ENCODE measurements at regions of chr19 and their contacts with region 1.

Region 1: GRCh38 chr19:1767464-1767933 is 14.2 kb downstream of the ONECUT3 start:
- DNase-seq: peak in 2 of 5 donors; percentile 30 to 41
- ATAC-seq: peak in 3 of 4 donors; percentile 65 to 73 (median 71)
- H3K4me3 ChIP-seq: no peak overlapping the region
- H3K27ac ChIP-seq: no peak overlapping the region
- H3K4me1 ChIP-seq: peaks cover 0 to 4% (median 0%) of the 10 kb centered on the region in 12 donors
- H3K27me3 ChIP-seq: peaks cover 57 to 100% (median 76%) of the 10 kb centered on the region in 9 donors
- CTCF ChIP-seq: peak; percentile 80 to 95 (median 90)
- POLR2A ChIP-seq: no peak

Region 2: DNA sequence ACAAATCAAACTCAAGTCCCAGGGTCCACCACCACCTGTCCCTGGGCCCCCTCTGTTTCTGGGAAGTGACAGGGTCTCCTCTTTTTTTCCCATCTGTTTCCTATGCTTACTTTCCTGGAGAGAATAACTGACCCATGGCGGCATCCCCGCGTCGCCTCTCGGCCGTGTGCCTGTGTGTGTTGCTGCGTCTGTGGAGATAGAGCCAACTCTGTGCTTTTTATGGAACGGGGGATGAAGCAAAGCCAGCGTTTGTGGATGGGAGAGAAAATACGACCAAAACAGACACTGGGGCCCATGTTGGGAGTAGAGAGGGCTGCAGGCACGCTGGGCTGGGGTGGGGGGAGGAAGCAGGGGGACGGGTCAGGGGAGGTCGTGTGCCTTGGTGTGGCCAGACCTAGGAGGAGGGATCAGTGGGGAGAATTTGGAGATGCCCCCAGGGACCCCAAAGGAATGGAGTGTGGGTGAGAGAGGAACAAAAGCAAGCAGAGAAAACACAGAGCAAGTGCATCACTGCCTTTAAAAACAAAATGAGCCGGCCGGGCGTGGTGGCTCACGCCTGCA is 227.1 kb before region 1 on chr19:
- intact Hi-C with region 1: loop called in 6 of 10 experiments (anchors 5 to 10 kb)
- DNase-seq: no peak
- ATAC-seq: peak in 2 of 4 donors; percentile 64 to 71
- H3K4me3 ChIP-seq: no peak overlapping the region
- H3K27ac ChIP-seq: peak overlapping the region in 2 of 12 donors; percentile 17 to 49
- H3K4me1 ChIP-seq: peaks cover 0 to 20% (median 3%) of the 10 kb centered on the region in 12 donors
- H3K27me3 ChIP-seq: peaks cover 0 to 31% (median 1%) of the 10 kb centered on the region in 9 donors
- CTCF ChIP-seq: no peak
- POLR2A ChIP-seq: no peak

Region 3: GRCh38 chr19:1549332-1549945 is 218.1 kb before region 1 on chr19:
- intact Hi-C with region 1: loop called (anchors 1 to 10 kb)
- DNase-seq: no peak
- ATAC-seq: no peak
- H3K4me3 ChIP-seq: no peak overlapping the region
- H3K27ac ChIP-seq: no peak overlapping the region
- H3K4me1 ChIP-seq: peaks cover 0 to 5% (median 0%) of the 10 kb centered on the region in 12 donors
- H3K27me3 ChIP-seq: peaks cover 0 to 17% (median 7%) of the 10 kb centered on the region in 9 donors
- CTCF ChIP-seq: no peak
- POLR2A ChIP-seq: no peak

Region 4: GRCh38 chr19:1605236-1606137 is 162.0 kb before region 1 on chr19 and contains the start of gene UQCR11:
- intact Hi-C with region 1: loop called in 1 of 10 experiments (anchors 5 kb)
- DNase-seq: peak; percentile 96 to 97 (median 97)
- ATAC-seq: peak; percentile 94 to 97 (median 96)
- H3K4me3 ChIP-seq: peak within 1 kb of the TSS; percentile 80 to 100 (median 90)
- H3K27ac ChIP-seq: peak within 1 kb of the TSS; percentile 87 to 97 (median 95)
- H3K4me1 ChIP-seq: peaks cover 0 to 45% (median 28%) of the 10 kb centered on the region in 12 donors
- H3K27me3 ChIP-seq: no peaks in the 10 kb centered on the region
- CTCF ChIP-seq: peak; percentile 35 to 75 (median 54)
- POLR2A ChIP-seq: peak in 1 of 2 donors; percentile 51
- total RNA-seq, gene UQCR11: 170 to 982 (median 690) TPM

Region 5: DNA sequence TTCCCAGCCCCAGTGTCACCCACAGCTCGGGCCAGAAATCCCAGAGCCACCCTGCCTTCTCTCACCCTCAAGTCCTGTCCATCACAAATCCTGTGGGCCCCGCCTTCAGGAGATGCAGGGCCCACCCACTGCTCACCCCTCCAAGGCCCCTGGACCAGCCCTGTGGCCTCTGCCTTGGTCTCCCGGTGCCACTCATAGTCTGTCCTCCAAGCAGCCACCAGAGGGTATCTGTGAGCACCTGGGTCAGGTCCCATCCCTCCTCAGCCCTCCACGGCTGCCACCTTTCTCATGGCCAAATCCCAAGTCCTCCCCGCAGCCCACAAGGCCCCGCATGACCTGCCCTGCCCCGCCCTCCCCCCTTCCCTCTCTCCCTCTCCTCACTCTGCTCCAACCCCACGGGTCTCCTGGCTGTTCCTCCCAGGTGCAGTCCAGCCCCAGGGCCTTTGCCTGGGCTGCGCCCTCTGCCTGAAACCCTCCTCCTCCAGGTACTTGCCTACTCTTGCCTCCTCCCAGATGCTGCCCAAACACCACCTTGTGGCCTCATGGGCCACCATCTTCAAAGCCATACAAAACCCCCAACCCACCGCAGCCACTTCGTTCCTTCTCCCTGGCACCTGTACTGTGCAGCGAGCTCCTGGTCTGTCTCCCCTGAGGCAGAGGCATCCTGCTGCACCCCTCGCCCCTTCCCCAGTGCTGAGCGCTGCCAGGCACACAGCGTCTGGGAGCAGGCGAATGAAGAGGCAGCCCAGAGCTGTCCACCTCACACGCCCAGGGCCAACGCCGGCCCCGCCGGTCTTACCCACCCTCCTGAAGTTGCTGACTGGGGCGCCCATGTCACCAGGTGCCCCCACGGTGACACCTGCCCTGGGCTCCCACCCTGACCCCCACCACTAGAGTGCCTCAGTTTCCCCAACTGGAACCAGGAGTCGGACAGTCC is 149.1 kb before region 1 on chr19:
- intact Hi-C with region 1: loop called in 1 of 10 experiments (anchors 5 kb)
- DNase-seq: peak in 1 of 5 donors; percentile 61
- ATAC-seq: peak; percentile 51 to 69 (median 60)
- H3K4me3 ChIP-seq: no peak overlapping the region
- H3K27ac ChIP-seq: peak overlapping the region in 5 of 12 donors; percentile 19 to 59 (median 40)
- H3K4me1 ChIP-seq: peaks cover 0 to 23% (median 9%) of the 10 kb centered on the region in 12 donors
- H3K27me3 ChIP-seq: no peaks in the 10 kb centered on the region
- CTCF ChIP-seq: peak in 10 of 12 donors; percentile 8 to 52 (median 38)
- POLR2A ChIP-seq: no peak

Region 6: DNA sequence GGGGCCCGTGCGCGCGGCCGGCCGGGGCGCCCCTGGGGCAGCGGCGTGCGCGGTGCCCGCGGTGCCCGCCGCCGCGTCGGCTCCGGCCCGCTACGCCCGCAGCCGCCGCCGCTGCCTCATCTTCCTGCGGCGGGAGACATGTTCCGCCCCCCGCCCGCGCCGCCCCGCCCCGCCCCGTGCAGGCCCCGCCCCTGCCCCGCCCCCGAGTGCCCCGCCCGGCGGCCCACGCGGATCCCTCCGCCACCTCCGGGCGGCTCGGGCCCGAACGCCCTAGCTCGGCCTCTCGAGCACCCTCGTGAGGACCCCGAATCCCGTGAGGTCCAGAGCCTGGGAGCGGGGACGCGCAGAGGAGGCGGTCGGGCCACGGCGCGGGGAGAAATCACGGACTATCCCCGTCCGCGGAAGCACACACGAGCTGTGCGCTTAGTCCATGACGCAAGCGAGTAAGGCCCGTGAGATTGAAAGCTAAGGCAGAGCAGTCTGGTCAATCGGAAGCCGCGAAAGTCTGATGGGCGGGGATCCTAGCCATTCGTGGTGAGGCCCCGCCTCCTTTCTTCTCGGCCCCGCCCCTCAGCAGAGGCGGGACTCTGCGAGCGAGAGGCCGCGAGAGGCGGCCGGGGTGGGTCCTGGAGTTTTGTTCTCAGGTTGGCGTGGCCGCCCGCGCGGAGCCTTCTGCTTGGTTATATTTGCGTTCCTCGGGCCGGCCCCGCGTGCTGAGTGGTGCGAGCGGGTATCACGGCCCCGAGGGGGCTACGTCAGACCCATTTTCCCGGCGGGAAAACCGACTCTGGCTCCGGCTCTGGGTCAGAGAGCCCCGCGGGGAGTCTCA is 114.8 kb before region 1 on chr19 and contains the start of gene TCF3:
- intact Hi-C with region 1: no loop called
- DNase-seq: peak; percentile 97 to 99 (median 98)
- ATAC-seq: peak; percentile 98 to 99 (median 99)
- H3K4me3 ChIP-seq: peak within 1 kb of the TSS; percentile 71 to 99 (median 88)
- H3K27ac ChIP-seq: peak within 1 kb of the TSS; percentile 99 to 100 (median 100)
- H3K4me1 ChIP-seq: peaks cover 0 to 22% (median 12%) of the 10 kb centered on the region in 12 donors
- H3K27me3 ChIP-seq: peaks cover 0 to 1% (median 0%) of the 10 kb centered on the region in 9 donors
- CTCF ChIP-seq: no peak
- POLR2A ChIP-seq: peak in 1 of 2 donors; percentile 56
- total RNA-seq, gene TCF3: 13.2 to 38.0 (median 22.3) TPM